ENCODE measurements at regions of chr7 and their contacts with region 1.

Region 1: GRCh38 chr7:36291387-36292316 is 98.0 kb upstream of the ANLN start:
- DNase-seq: peak; percentile 88
- H3K4me3 ChIP-seq: peak overlapping the region in 1 of 2 donors; percentile 6
- H3K27ac ChIP-seq: peak overlapping the region; percentile 79 to 80
- H3K4me1 ChIP-seq: peaks cover 20% of the 10 kb centered on the region
- H3K27me3 ChIP-seq: no peaks in the 10 kb centered on the region
- CTCF ChIP-seq: peak; percentile 94 to 99 (median 98)
- POLR2A ChIP-seq: no peak

Region 2: GRCh38 chr7:35823440-35823839 is 468.2 kb before region 1 on chr7:
- intact Hi-C with region 1: no loop called
- DNase-seq: no peak
- H3K4me3 ChIP-seq: no peak overlapping the region
- H3K27ac ChIP-seq: no peak overlapping the region
- H3K4me1 ChIP-seq: no peaks in the 10 kb centered on the region
- H3K27me3 ChIP-seq: no peaks in the 10 kb centered on the region
- CTCF ChIP-seq: no peak
- POLR2A ChIP-seq: no peak

Region 3: DNA sequence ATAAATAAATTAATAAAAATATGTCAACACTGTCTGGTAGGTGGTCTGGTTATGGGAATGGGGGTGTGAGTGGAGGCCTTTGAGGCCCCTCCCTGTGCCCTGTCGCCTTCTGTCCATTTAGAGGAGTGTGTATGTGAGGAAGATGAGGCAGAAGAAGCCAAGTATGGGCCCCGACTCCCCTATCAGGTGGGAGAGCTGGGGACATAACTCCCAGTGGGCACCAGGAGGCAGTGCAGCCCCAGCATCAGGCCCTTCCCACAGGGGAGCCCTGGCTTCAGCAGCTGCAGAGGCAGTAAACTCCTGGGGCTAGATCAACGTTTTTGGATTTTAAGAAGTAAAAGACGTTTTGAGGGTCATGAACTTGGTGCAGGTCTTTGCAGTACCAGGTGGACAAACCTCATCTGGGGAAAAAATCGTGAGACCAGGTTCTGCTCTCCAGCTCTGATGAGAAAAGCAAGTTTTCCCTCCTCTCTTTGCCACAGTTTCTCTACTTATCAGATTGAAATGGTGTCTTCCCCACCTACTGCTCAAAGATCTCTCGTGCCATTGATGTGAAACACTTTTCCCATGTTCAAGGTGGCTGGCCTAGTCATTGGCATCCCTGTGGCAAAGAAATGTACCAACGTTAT is 306.4 kb before region 1 on chr7:
- intact Hi-C with region 1: loop called (anchors 2 kb)
- DNase-seq: peak; percentile 79
- H3K4me3 ChIP-seq: no peak overlapping the region
- H3K27ac ChIP-seq: no peak overlapping the region
- H3K4me1 ChIP-seq: no peaks in the 10 kb centered on the region
- H3K27me3 ChIP-seq: no peaks in the 10 kb centered on the region
- CTCF ChIP-seq: peak; percentile 82 to 97 (median 94)
- POLR2A ChIP-seq: no peak

Region 4: DNA sequence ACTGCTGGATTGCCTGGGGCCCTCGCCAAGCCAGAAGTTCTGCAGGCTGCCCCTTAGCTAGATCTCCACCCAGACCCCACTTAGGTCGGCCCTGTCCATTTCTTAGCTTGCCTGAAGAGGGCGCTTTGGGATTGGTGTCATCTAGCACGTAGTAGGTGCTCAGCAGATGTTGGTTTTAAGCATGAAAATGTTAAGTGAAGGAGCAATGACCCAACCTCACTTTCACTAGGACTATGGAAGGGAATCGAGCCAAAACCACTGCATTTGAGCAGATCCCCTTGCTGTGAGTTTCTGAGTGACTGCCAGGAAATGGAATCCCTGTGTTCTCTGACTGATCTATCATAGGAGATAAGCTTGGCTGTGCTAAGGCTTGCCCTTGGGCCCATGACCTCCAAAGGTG is 270.3 kb before region 1 on chr7:
- intact Hi-C with region 1: no loop called
- DNase-seq: no peak
- H3K4me3 ChIP-seq: no peak overlapping the region
- H3K27ac ChIP-seq: no peak overlapping the region
- H3K4me1 ChIP-seq: no peaks in the 10 kb centered on the region
- H3K27me3 ChIP-seq: no peaks in the 10 kb centered on the region
- CTCF ChIP-seq: no peak
- POLR2A ChIP-seq: no peak

Region 5: DNA sequence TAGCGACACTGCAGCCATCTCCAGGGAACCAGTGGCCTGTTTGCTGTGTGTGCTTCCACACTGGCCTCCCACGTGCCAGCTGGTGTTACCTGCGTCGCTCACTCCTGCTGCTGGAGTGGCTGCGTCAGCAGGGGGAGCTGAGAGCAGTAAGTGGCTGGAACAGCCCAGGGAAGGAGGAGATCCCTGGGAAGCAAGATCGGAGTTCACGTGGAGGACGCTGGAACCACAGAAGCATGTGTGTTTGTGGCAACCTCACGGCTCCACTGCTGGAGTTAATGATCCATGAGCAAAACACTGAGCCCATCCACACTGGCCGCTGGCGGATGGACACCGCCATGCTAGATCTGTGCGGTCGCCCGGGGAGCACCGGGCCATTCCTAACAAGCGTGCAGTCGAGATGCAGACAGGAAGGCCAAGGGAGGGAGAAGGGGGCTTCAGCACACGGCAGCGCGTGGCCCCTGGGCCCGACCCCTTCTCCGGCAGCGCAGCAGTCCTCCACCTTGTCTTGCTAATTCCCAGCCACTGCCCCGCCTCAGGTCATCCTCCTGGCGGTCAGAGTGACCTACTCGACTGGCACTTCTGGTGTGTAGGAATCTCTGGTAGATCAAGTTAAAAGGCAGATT is 207.1 kb before region 1 on chr7:
- intact Hi-C with region 1: loop called (anchors 2 kb)
- DNase-seq: peak; percentile 64
- H3K4me3 ChIP-seq: no peak overlapping the region
- H3K27ac ChIP-seq: no peak overlapping the region
- H3K4me1 ChIP-seq: no peaks in the 10 kb centered on the region
- H3K27me3 ChIP-seq: no peaks in the 10 kb centered on the region
- CTCF ChIP-seq: peak in 3 of 4 experiments; percentile 27 to 53 (median 37)
- POLR2A ChIP-seq: no peak

Region 6: DNA sequence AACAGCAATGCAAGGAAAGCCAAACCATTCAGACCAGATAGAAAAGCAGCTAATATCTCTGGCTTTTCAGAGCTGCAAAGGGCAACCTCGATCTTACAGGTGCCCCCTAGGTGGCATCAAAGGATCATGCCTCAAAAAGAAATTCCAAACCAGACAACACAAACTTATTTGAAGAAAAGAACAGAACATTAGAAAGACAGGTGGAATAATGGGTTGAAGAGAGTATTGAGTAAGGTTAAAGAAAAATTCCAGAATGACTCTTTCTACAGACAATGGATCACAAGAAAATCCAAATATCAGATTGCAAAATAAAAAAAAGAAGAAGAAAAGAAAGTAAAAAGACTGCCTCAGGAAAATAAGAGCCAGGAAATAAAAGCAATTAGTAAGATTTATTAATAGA is 943.3 kb after region 1 on chr7:
- intact Hi-C with region 1: no loop called
- DNase-seq: no peak
- H3K4me3 ChIP-seq: no peak overlapping the region
- H3K27ac ChIP-seq: no peak overlapping the region
- H3K4me1 ChIP-seq: no peaks in the 10 kb centered on the region
- H3K27me3 ChIP-seq: no peaks in the 10 kb centered on the region
- CTCF ChIP-seq: peak in 3 of 4 experiments; percentile 28 to 52 (median 41)
- POLR2A ChIP-seq: no peak